Activated CD4-positive, alpha-beta T cell treated with anti-CD3 and anti-CD28 coated beads for 36 hours (primary cell): ENCODE measurements at regions of chr10 and their contacts with region 1.

Region 1: GRCh38 chr10:12448729-12449391 is 99.5 kb downstream of the CAMK1D start:
- DNase-seq: peak; percentile 86
- ATAC-seq: peak; percentile 94
- H3K4me3 Mint-ChIP-seq: peak overlapping the region; percentile 68
- H3K27ac Mint-ChIP-seq: peak overlapping the region; percentile 92
- H3K4me1 Mint-ChIP-seq: peaks cover 43% of the 10 kb centered on the region
- H3K27me3 Mint-ChIP-seq: no peaks in the 10 kb centered on the region

Region 2: DNA sequence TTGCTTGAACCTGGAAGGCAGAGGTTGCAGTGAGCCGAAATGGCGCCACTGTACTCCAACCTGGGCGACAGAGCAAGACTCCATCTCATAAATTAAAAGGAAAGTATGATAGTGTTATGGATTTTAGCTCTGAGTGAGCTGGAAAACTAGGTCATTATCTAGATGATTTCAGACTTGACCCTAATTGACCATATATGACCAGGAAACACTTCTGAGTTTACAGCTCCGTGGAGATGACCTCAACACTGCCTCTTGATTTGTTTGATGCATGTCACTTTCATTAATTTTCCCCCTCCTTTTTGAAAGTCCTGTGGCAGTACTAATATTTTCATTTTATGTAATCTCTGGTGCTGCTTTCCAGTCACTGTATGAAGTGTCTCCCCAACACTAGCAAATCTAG is 327.2 kb before region 1 on chr10:
- CTCF ChIA-PET with region 1: no interaction called
- POLR2A ChIA-PET with region 1: no interaction called
- intact Hi-C with region 1: loop called in 1 of 2 experiments (anchors 1 kb)
- DNase-seq: no peak
- ATAC-seq: no peak
- H3K4me3 Mint-ChIP-seq: peak overlapping the region; percentile 54
- H3K27ac Mint-ChIP-seq: peak overlapping the region; percentile 94
- H3K4me1 Mint-ChIP-seq: peaks cover 32% of the 10 kb centered on the region
- H3K27me3 Mint-ChIP-seq: no peaks in the 10 kb centered on the region

Region 3: GRCh38 chr10:12369982-12370381 is 78.9 kb before region 1 on chr10:
- CTCF ChIA-PET with region 1: no interaction called
- POLR2A ChIA-PET with region 1: no interaction called
- intact Hi-C with region 1: loop called in 1 of 2 experiments (anchors 2 kb)
- DNase-seq: no peak
- ATAC-seq: no peak
- H3K4me3 Mint-ChIP-seq: no peak overlapping the region
- H3K27ac Mint-ChIP-seq: no peak overlapping the region
- H3K4me1 Mint-ChIP-seq: peaks cover 27% of the 10 kb centered on the region
- H3K27me3 Mint-ChIP-seq: no peaks in the 10 kb centered on the region

Region 4: DNA sequence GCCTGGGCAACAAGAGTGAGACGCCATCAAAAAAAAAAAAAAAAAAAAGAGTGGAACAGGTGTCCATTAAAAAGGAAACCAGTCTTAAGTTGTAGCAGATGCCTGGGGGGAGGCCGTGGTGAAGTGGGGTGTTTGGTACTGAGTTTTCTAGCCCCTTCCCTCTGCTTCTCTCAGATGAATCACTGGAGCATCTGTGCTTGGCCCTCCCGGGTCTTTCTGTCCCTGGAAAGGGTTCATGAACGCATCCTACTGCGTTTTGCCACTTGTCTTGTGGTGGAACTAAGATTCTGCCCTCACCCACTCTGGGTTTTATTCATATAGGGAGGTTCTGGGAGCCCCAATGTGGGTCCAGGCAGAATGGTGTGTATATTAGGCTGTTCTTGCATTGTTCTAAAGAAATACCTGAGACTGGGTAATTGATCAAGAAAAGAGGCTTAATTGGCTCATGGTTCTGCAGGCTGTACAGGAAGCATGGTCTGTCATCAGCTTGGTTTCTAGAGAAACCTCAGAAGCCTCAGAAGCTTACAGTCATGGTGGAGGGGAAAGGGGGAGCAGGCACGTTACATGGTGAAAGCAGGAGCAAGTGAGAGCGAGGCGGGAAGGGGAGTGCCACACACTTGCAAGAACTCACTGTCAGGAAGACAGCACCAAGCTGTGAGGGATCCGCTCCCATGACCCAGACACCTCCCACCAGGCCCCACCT is 36.0 kb before region 1 on chr10:
- CTCF ChIA-PET with region 1: no interaction called
- POLR2A ChIA-PET with region 1: no interaction called
- intact Hi-C with region 1: loop called in 1 of 2 experiments (anchors 1 kb)
- DNase-seq: peak; percentile 67
- ATAC-seq: peak; percentile 87
- H3K4me3 Mint-ChIP-seq: peak overlapping the region; percentile 38
- H3K27ac Mint-ChIP-seq: peak overlapping the region; percentile 35
- H3K4me1 Mint-ChIP-seq: peaks cover 32% of the 10 kb centered on the region
- H3K27me3 Mint-ChIP-seq: no peaks in the 10 kb centered on the region

Region 5: GRCh38 chr10:12638103-12638502 is 189.2 kb after region 1 on chr10:
- CTCF ChIA-PET with region 1: no interaction called
- POLR2A ChIA-PET with region 1: no interaction called
- intact Hi-C with region 1: loop called in 1 of 2 experiments (anchors 1 kb)
- DNase-seq: peak; percentile 74
- ATAC-seq: peak; percentile 49
- H3K4me3 Mint-ChIP-seq: no peak overlapping the region
- H3K27ac Mint-ChIP-seq: no peak overlapping the region
- H3K4me1 Mint-ChIP-seq: peaks cover 56% of the 10 kb centered on the region
- H3K27me3 Mint-ChIP-seq: no peaks in the 10 kb centered on the region

Region 6: GRCh38 chr10:12782537-12782936 is 333.7 kb after region 1 on chr10:
- CTCF ChIA-PET with region 1: no interaction called
- POLR2A ChIA-PET with region 1: no interaction called
- intact Hi-C with region 1: loop called in 1 of 2 experiments (anchors 5 kb)
- DNase-seq: peak; percentile 65
- ATAC-seq: no peak
- H3K4me3 Mint-ChIP-seq: no peak overlapping the region
- H3K27ac Mint-ChIP-seq: peak overlapping the region; percentile 48
- H3K4me1 Mint-ChIP-seq: peaks cover 38% of the 10 kb centered on the region
- H3K27me3 Mint-ChIP-seq: no peaks in the 10 kb centered on the region